ENCODE measurements at regions of chr1 and their contacts with region 1.

Region 1: DNA sequence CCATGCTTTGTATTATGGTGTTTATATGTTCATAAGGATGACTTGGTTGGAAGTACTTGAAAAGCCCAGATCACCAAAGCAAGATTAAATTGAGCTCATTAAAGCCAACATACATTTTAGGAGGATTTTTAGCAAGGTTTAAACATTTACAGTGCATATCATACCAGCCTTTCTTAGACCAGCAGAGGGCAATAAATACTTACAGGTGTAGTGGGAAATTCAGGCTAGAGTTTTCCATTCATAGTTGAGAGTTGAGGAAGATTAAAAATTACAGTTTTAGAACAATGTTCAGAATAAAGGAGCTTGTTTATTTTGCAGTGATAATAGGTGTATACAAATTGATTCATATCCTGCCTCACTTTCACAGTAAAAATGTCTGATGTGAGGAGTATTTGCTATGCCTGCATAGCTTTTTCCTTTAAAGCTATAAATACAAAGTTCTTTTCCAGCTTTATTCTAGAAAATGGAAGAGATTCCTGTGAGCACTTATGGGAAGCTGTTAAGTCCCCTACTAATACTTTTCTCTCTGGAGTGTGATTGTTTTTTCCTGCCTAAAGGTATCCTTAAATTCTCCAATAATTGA is 35.3 kb downstream of the DTL start:
- DNase-seq: no peak
- ATAC-seq: peak; percentile 90
- H3K4me3 ChIP-seq: no peak overlapping the region
- H3K27ac ChIP-seq: no peak overlapping the region
- H3K4me1 ChIP-seq: no peaks in the 10 kb centered on the region
- H3K27me3 ChIP-seq: no peaks in the 10 kb centered on the region
- CTCF ChIP-seq: peak; percentile 62 to 92 (median 87)
- POLR2A ChIP-seq: no peak

Region 2: DNA sequence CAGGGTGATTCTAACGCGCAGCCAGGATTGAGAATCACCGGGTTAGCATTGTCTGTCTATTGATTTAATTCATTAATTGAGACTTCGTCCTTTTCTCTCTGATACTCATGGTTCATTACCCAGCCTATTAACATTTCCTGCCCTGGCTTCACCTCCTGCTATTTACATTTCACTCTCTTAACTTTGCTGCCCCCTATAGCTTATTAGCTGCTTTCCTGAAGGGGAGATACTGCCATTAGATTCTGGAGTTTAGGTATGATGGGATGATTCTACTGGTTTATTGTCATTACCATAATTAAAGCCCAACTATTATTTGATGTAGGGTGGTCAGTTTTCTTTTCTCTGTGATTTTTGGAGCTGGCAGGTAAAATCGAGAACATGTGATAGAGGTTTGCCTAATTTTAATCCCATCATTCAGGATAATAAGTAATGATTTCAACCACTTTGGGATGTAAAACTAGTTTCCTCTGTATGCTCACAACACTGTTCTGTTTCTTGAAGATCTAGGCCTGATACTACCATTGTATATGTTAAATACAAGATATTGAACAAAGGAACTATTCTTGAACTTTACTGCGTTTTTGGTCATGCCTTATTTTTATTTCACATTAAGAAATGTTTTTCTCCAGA is 220.8 kb after region 1 on chr1:
- intact Hi-C with region 1: loop called (anchors 10 kb)
- DNase-seq: peak in 1 of 4 donors; percentile 27
- ATAC-seq: peak; percentile 61
- H3K4me3 ChIP-seq: no peak overlapping the region
- H3K27ac ChIP-seq: no peak overlapping the region
- H3K4me1 ChIP-seq: peaks cover 73% of the 10 kb centered on the region
- H3K27me3 ChIP-seq: no peaks in the 10 kb centered on the region
- CTCF ChIP-seq: peak; percentile 31 to 83 (median 78)
- POLR2A ChIP-seq: no peak

Region 3: GRCh38 chr1:212359794-212360479 is 289.1 kb after region 1 on chr1:
- intact Hi-C with region 1: loop called (anchors 5 kb)
- DNase-seq: no peak
- ATAC-seq: no peak
- H3K4me3 ChIP-seq: no peak overlapping the region
- H3K27ac ChIP-seq: no peak overlapping the region
- H3K4me1 ChIP-seq: no peaks in the 10 kb centered on the region
- H3K27me3 ChIP-seq: no peaks in the 10 kb centered on the region
- CTCF ChIP-seq: no peak
- POLR2A ChIP-seq: no peak

Region 4: DNA sequence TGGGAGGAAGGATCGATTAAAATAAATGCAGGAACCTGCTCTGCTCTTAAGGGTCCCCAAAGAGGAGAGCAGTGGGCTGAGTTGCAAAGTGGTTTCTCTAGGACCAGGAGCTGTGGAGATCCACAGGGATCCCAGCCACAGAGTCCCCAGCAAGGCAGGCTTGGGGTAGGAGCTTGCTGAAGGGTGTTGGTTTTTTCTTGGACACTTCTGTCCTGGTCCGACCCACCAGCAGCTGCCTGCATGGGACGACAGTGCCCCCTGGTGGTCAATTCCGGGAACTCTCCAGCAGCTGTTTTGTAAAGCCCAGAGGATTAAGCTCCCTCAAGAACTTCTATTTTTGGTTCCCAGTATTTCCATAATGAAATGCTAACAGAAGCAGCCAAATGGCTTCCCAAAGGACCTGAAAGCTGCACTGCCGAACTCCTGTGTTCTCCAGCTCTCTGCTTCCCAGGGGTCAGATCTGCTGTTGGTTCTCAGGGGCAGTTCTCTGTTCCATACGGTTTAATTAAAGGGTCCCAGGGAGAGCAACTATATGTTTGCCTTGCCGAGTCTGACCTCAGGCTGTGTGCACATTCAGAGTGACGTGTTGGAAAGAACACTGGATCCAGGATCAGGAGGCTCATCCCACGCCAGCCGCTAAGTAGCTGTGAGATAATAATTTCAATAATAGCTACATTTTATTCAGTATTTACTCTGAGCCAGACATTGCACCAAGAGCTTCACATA is 385.2 kb after region 1 on chr1:
- intact Hi-C with region 1: loop called (anchors 5 kb)
- DNase-seq: peak; percentile 85 to 91 (median 87)
- ATAC-seq: peak; percentile 89
- H3K4me3 ChIP-seq: no peak overlapping the region
- H3K27ac ChIP-seq: no peak overlapping the region
- H3K4me1 ChIP-seq: peaks cover 7% of the 10 kb centered on the region
- H3K27me3 ChIP-seq: no peaks in the 10 kb centered on the region
- CTCF ChIP-seq: peak; percentile 92 to 98 (median 93)
- POLR2A ChIP-seq: no peak